Dendritic cell treated with granulocyte-macrophage colony-stimulating factor and Interleukin-4, amounts not matched to agents 40 ng/mL and 50 ng/mL, for 4 days (primary cell): ENCODE measurements at regions of chr10 and their contacts with region 1.

Region 1: DNA sequence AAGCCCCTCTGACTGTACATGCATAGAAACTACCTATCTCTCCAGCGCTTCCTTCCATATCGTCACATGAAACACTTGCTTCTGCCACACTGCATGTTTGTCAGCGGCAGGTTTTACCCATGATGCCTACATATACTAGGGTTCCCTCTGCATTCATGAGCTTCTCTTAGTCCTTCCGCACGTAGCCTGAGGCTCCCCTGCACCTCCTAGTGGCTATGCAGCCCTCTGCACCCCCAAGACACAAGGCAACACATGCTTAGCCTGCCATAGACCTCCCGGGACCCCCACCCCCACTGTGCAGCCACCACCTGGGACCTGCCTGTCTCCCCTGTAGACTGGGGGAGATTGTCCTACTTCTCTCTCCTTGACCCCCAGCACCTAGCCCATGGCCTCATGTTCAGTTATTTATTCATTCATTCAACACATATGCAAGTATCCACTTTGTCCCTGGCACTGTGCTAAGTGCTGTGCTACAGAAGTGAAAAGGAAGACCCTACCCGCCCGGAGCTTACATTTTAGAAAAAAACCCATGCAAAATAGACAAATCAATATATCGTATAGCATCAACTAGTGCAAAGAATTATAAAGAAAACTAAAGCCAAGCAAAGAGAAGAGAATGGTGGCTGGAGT is 23.5 kb downstream of the TMEM273 start:
- H3K4me3 Mint-ChIP-seq: no peak overlapping the region
- H3K27ac Mint-ChIP-seq: peak overlapping the region; percentile 15
- H3K4me1 Mint-ChIP-seq: peaks cover 83% of the 10 kb centered on the region
- H3K27me3 Mint-ChIP-seq: peaks cover 2% of the 10 kb centered on the region

Region 2: DNA sequence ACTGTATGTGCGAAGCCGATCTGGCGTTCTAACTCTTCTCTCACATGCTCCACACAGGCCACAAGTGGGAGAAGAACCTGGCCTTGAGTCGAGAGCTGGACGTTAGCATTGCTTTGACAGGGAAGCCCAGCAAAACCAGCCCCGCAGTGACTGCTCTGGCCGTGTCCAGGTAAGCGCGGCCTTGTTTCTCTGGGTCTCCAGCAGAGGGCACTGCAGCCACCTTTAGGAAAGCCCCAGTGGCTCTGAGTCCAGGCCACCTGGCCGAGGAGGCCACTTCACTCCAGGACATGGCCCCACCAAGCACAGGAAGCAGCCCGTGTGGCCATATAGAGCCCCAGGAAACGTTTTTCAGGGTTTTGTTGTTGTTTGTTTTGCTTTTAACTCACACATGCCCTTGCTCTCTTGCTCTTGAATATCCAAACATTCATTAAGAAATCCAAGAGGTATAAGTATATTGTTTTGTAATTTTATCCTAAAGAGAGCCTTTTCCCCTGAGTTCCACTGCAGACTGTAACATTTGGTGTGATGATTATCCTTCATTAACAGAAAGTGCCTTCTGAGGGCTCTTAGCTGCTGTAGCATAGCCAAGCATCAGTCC is 183.3 kb before region 1 on chr10:
- intact Hi-C with region 1: loop called (anchors 10 kb)
- H3K4me3 Mint-ChIP-seq: no peak overlapping the region
- H3K27ac Mint-ChIP-seq: no peak overlapping the region
- H3K4me1 Mint-ChIP-seq: no peaks in the 10 kb centered on the region
- H3K27me3 Mint-ChIP-seq: no peaks in the 10 kb centered on the region

Region 3: DNA sequence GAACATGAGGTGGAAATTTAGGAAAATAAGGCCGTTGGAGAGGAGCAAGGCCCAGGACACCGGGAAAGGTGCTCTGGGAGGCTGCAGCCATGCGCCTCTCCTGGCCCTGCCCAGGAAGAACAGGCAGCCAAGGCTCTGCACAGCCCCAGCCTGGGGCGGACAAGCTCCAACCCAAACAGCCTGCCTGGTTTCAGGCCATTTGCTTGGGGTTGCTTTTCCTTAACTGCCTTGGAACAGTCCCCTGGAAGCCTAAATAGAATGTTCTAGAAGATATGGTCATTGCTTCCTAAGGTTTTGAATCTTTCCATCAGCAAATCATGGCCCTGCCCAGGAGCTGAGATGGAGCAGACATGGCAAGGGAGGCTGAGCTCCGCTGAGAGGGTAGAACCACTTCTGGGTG is 60.4 kb before region 1 on chr10:
- intact Hi-C with region 1: no loop called
- H3K4me3 Mint-ChIP-seq: no peak overlapping the region
- H3K27ac Mint-ChIP-seq: no peak overlapping the region
- H3K4me1 Mint-ChIP-seq: peaks cover 14% of the 10 kb centered on the region
- H3K27me3 Mint-ChIP-seq: peaks cover 16% of the 10 kb centered on the region